ENCODE measurements at regions of chr13 and their contacts with region 1.

Region 1: DNA sequence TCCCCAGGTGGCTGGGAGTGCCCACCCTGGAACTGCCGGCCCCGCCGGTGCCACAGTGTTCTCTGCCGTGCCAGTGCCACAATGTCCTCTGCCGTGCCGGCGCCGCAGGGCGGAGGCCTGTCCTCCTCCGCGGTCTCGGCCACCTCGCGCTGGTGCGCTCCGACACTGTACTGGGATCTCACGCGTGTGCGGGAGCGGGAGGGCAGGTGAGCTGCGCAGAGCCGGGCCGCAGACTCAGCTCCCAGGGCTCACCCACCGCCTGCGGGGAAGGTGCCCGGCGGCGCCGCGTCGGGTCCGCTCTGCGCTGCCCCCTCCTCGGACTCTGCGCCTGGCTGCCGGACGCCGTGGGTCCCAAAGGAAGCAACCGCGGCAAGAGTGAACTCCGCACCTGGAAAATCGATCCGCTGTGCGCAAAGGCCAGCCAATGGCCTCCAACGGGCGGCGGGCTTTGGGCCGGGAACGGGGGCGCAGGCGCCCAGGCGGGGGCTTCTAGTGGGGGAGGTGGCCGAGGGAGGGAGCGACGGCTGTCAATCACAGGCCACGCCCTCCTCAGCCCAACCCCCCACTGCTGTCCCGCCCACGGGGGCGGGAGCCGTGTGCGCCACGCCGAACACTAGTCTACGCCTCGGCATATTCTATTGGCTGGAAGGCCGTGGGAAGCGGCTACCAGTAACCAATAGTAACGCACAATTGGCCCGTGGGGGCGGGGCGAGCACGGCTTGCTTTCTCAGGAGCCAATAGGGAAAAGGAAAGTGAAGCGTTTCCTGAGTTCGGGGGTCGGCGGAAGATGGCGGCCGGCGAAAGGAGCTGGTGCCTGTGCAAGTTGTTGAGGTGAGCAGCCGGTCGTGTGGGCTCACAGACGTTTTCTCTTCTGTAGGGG is at the start of gene ALG11:
- DNase-seq: peak; percentile 97 to 100 (median 99)
- ATAC-seq: peak; percentile 96 to 98
- H3K4me3 Mint-ChIP-seq: peak within 1 kb of the TSS; percentile 89 to 99 (median 99)
- H3K27ac Mint-ChIP-seq: peak within 1 kb of the TSS; percentile 86 to 98 (median 96)
- H3K4me1 Mint-ChIP-seq: peaks cover 8 to 28% (median 27%) of the 10 kb centered on the region in 4 donors
- H3K27me3 Mint-ChIP-seq: peaks cover 0 to 30% (median 5%) of the 10 kb centered on the region in 5 donors
- polyA plus RNA-seq, gene ALG11: 22.1 to 25.5 (median 23.8) TPM

Region 2: DNA sequence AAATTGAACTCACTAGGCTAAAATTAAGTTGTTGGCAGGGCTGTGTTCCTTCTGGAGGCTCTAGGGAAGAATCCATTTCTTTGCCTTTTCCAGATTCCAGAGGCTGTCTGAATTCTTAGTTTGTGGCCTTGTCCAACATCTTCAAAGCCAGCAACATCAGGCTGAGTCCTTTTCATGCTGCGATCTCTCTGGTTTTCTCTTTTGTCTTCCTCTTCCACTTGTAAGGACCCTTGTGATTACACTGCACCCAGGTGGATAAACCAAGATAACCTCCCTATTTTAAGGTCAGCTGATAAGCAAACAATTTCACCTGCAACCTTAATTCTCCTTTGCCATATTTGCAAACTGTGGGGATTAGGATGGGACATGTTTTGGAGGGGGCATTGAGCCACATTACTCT is 24.2 kb after region 1 on chr13:
- POLR2A ChIA-PET with region 1: no interaction called
- DNase-seq: no peak
- ATAC-seq: no peak
- H3K4me3 Mint-ChIP-seq: no peak overlapping the region
- H3K27ac Mint-ChIP-seq: no peak overlapping the region
- H3K4me1 Mint-ChIP-seq: peaks cover 0 to 12% (median 6%) of the 10 kb centered on the region in 4 donors
- H3K27me3 Mint-ChIP-seq: no peaks in the 10 kb centered on the region

Region 3: GRCh38 chr13:52194184-52194868 is 182.5 kb after region 1 on chr13:
- POLR2A ChIA-PET with region 1: interaction called, 18 read pairs
- DNase-seq: peak; percentile 66 to 96 (median 86)
- ATAC-seq: peak; percentile 80 to 83
- H3K4me3 Mint-ChIP-seq: peak overlapping the region; percentile 90 to 99 (median 99)
- H3K27ac Mint-ChIP-seq: peak overlapping the region; percentile 95 to 99 (median 98)
- H3K4me1 Mint-ChIP-seq: peaks cover 12 to 43% (median 33%) of the 10 kb centered on the region in 4 donors
- H3K27me3 Mint-ChIP-seq: no peaks in the 10 kb centered on the region

Measured in naive thymus-derived CD8-positive, alpha-beta T cell (primary cell).